Left cardiac atrium (tissue), 4 donors: ENCODE measurements at regions of chr9 and their contacts with region 1.

Region 1: DNA sequence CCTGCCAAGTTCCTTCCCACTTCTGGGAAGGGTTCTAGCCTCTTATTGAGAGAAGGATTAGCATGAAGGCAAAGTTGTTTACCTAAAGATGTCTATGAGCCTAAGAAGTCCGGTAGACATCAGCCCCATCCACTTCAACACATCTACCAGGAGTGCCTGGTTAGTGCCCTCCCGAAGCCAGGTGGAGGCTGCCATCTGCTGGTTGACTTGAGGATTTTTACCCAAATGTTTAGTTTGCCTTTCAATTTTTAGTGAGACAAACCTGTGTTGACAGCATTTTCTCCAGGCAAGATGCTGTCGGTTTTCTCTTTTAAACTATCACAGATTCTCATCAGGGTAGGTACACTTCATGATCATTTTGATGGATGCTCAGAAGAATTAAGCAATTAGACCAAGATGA is 83.6 kb upstream of the TNFSF8 start:
- DNase-seq: peak; percentile 61
- ATAC-seq: peak; percentile 74 to 79

Region 2: GRCh38 chr9:114372921-114373448 is 641.0 kb before region 1 on chr9:
- intact Hi-C with region 1: no loop called
- DNase-seq: peak; percentile 63
- ATAC-seq: peak; percentile 72 to 77

Region 3: GRCh38 chr9:114405294-114406034 is 608.5 kb before region 1 on chr9:
- intact Hi-C with region 1: loop called (anchors 2 to 10 kb)
- DNase-seq: peak; percentile 79
- ATAC-seq: peak; percentile 92 to 93

Region 4: GRCh38 chr9:114413861-114414301 is 600.1 kb before region 1 on chr9:
- intact Hi-C with region 1: loop called in 1 of 2 experiments (anchors 10 kb)
- DNase-seq: no peak
- ATAC-seq: peak in 1 of 2 donors; percentile 23

Region 5: DNA sequence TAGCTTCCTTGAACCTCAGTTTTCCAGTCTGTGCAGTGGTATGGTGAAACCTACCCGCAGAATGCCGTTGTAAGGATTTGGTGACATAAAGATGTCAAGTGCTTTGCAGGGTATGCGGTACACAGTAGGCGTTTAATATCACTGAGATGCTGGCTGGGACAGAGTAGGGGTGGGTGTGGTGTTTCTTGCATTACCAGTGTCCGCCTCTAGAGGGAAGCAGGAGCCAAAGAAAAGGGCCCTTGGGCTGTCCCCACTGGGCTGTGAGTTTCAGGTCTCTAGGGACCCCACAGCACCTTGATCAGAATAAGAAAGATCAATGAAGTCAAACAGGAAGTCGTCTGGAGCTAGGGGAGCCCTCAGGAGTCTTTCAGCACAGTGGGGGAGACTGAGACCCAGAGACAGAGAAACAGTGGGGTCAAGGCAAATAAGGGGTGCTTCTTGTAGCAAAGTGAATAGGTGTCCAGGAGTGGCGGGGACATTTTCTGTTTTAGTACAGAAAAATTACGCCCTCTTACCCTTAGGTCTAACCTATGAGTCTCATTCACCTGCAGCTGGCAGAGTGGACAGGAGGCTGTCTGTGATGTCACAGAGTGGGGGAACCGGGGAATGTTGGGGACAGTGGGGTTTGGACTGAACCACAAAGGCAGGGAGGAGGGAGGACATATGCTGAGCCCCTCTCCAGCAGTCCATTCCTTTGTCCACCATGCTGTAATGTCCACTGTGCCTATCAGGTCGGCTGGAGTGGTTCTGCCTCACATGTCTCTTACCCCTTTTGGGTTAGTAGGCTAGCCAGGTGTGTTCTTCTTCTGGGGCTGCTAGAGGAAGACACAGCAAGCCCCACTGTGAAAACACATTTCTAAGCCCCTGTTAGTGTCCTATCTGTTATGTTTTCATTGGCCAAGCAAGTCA is 351.7 kb before region 1 on chr9:
- intact Hi-C with region 1: loop called in 1 of 2 experiments (anchors 5 kb)
- DNase-seq: peak; percentile 37
- ATAC-seq: peak; percentile 72 to 80

Region 6: GRCh38 chr9:114681594-114682332 is 332.2 kb before region 1 on chr9 and contains the start of gene TEX48:
- intact Hi-C with region 1: loop called in 1 of 2 experiments (anchors 5 kb)
- DNase-seq: peak; percentile 54
- ATAC-seq: peak; percentile 73 to 78
- total RNA-seq, gene TEX48: not detected

Region 7: GRCh38 chr9:114738581-114739316 is 275.2 kb before region 1 on chr9:
- intact Hi-C with region 1: loop called (anchors 1 to 5 kb)
- DNase-seq: peak; percentile 63
- ATAC-seq: peak; percentile 85 to 96

Region 8: GRCh38 chr9:115117999-115118878 is 104.2 kb after region 1 on chr9 and contains the start of gene TNC:
- intact Hi-C with region 1: no loop called
- DNase-seq: peak; percentile 82
- ATAC-seq: peak; percentile 70 to 86
- total RNA-seq, gene TNC: 4.3 to 54.5 TPM